H1 (cell line): ENCODE measurements at regions of chr17 and their contacts with region 1.

Region 1: GRCh38 chr17:75504347-75504964 is 10.9 kb downstream of the CASKIN2 start:
- DNase-seq: peak in 1 of 2 experiments; percentile 78
- H3K4me3 ChIP-seq: no peak overlapping the region
- H3K27ac ChIP-seq: no peak overlapping the region
- H3K4me1 ChIP-seq: peaks cover 0 to 2% (median 0%) of the 10 kb centered on the region in 4 experiments; a peak in 1 of 7 replicates
- H3K27me3 ChIP-seq: no peaks in the 10 kb centered on the region
- CTCF ChIP-seq: peak; percentile 82 to 95 (median 94)
- EP300 ChIP-seq: no peak
- POLR2A ChIP-seq: no peak
- RAD21 ChIP-seq: peak; percentile 54 to 72

Region 2: GRCh38 chr17:75325827-75326225 is 178.6 kb before region 1 on chr17:
- CTCF ChIA-PET with region 1: no interaction called
- POLR2A ChIA-PET with region 1: no interaction called
- DNase-seq: no peak
- H3K4me3 ChIP-seq: no peak overlapping the region
- H3K27ac ChIP-seq: no peak overlapping the region
- H3K4me1 ChIP-seq: peaks cover 4 to 9% (median 7%) of the 10 kb centered on the region in 4 experiments; a peak in 5 of 7 replicates
- H3K27me3 ChIP-seq: no peaks in the 10 kb centered on the region
- CTCF ChIP-seq: no peak
- EP300 ChIP-seq: no peak
- POLR2A ChIP-seq: no peak
- RAD21 ChIP-seq: no peak

Region 3: DNA sequence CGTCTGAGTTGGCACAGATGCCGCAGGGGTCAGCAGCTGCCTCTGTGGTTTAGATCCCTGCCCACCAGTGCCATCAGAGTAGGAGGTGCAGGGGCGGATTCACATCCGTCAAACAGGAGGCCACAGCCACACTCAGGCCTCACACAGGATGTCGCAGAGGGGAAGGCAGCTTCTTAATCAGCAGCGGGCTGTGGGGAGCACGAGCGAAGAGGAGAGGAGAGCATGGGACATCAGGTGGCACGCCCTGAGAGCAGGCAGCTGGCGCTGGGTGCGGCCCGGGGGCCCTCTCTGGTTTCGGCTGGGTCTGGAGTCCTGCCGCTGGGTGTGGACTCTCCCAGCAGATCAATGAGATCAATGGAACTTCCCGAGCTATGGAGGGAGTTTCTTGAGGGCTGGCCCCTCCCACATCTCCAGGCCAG is 30.7 kb after region 1 on chr17:
- CTCF ChIA-PET with region 1: interaction called, 11 read pairs
- POLR2A ChIA-PET with region 1: no interaction called
- DNase-seq: no peak
- H3K4me3 ChIP-seq: no peak overlapping the region
- H3K27ac ChIP-seq: no peak overlapping the region
- H3K4me1 ChIP-seq: peaks cover 0 to 6% (median 4%) of the 10 kb centered on the region in 4 experiments; a peak in 5 of 7 replicates
- H3K27me3 ChIP-seq: no peaks in the 10 kb centered on the region
- CTCF ChIP-seq: no peak
- EP300 ChIP-seq: no peak
- POLR2A ChIP-seq: no peak
- RAD21 ChIP-seq: no peak

Region 4: GRCh38 chr17:75589012-75589918 is 84.8 kb after region 1 on chr17:
- CTCF ChIA-PET with region 1: interaction called, 16 read pairs
- POLR2A ChIA-PET with region 1: no interaction called
- DNase-seq: peak; percentile 88 to 94
- H3K4me3 ChIP-seq: peak overlapping the region; percentile 40 to 67 (median 58); a peak in 7 of 8 replicates
- H3K27ac ChIP-seq: no peak overlapping the region; the same call in 1 of the 2 replicates
- H3K4me1 ChIP-seq: peaks cover 0 to 9% (median 3%) of the 10 kb centered on the region in 4 experiments; a peak in 5 of 7 replicates
- H3K27me3 ChIP-seq: peaks cover 0 to 19% (median 5%) of the 10 kb centered on the region in 4 experiments; a peak in 4 of 7 replicates
- CTCF ChIP-seq: peak; percentile 61 to 77 (median 72)
- EP300 ChIP-seq: peak in 1 of 2 experiments; percentile 79; a peak in 1 of 3 replicates
- POLR2A ChIP-seq: peak in 1 of 2 experiments; percentile 45; a peak in 1 of 3 replicates
- RAD21 ChIP-seq: peak; percentile 49 to 57; a peak in 3 of 4 replicates